ENCODE measurements at regions of chr5 and their contacts with region 1.

Region 1: DNA sequence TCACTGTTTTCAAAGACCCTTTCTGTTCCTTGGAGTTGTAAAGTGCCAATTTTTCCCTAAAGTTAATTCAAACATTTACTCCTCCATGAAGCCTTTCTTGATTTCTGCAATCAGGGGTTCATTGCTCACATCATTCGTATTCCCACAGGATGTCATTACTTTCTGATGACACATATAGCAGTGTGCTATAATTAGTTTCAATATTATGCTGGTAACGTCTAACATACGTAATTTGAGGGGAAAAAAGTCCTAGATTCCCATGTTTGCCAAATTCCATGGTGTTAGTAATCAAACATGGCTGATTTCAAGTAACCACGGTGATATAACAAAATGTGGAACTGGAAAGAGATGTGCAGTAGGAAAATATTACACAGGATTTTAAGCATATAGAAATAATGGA is 468.2 kb upstream of the MEF2C start:
- DNase-seq: no peak
- H3K4me3 ChIP-seq: no peak overlapping the region
- H3K27ac ChIP-seq: no peak overlapping the region
- H3K4me1 ChIP-seq: 0 out of 2 replicates have a peak, but pooled peaks cover 4% of the 10 kb centered on the region
- H3K27me3 ChIP-seq: no peaks in the 10 kb centered on the region
- CTCF ChIP-seq: no peak

Region 2: DNA sequence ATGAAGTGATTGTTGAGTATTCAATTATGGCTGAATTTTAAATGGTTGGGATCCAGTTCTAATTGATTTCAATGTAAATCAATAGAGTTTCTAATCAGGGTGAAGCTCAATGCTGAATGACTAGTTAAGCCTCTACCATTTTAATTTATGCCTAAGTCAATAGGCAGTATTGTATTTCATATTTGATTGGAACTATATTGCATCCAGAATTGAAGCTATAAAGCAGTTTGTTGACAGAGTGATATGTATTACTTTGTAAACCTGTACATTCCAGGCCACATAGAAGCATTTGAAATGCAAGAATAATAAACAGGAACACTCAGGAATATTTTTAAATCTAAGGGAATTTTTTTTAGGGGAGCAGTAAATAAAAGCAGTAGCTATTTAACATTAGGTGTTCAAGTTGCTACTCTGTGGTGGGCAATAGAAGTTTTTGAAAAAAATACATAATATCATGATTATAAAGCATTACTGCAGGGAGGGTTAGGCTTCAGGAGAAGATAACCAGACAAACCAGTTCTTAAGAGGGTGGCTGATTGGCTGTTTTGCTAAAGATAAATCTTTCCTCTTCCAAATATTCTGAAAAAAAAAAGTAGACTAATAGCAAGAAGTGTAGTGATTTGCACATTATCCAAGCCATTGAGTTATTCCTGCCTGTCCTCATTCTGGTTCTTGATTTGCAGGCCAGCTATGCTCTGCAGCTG is 23.7 kb after region 1 on chr5:
- CTCF ChIA-PET with region 1: no interaction called
- POLR2A ChIA-PET with region 1: interaction called, 10 read pairs
- intact Hi-C with region 1: no loop called
- DNase-seq: no peak
- H3K4me3 ChIP-seq: no peak overlapping the region
- H3K27ac ChIP-seq: no peak overlapping the region
- H3K4me1 ChIP-seq: no peaks in the 10 kb centered on the region
- H3K27me3 ChIP-seq: no peaks in the 10 kb centered on the region
- CTCF ChIP-seq: no peak